CD8-positive, alpha-beta T cell (primary cell): ENCODE measurements at regions of chr2 and their contacts with region 1.

Region 1: DNA sequence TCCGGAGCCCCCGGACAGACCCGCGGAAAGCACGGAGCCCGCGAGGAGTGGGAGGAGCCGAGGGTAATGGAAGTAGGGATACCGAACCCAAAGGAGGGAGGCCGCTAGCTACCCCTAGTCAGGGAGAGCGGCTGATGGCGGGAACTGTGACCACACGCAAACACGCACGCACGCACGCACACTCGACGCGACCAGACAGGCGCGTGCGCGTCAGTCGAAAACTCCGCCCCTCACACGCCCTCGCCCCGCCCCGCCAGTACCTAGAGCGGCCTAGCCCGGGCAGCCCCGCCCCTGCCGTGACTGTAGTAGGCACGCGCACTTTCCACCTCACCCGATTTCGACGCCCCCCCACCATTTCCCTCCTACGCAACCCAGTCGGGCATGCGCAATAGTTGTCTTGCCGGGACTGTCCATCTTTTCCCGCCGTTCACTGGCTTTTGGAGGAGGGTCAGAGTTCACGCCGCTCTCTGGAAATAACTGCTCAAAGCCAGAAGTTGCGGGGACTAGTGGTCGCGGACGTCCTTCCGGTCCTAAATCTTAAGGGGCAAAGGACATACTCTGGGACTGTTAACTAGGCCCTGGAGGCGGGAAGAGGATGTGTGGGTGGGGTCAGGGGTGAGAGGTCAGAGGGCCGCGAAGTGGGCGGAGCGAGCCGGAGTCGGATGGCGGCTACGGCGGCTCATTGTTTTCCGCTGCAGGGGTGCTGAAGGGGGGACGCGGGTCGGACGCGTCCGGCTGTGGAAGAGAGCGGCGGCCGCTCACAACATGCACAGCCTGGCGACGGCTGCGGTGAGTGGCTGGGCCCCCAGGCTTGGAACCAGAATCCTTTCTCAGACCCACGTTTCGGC is at the starts of genes CNOT9 and USP37:
- DNase-seq: peak; percentile 99 to 100 (median 100)
- ATAC-seq: peak; percentile 90
- H3K4me3 ChIP-seq: peak within 1 kb of the TSS; percentile 84 to 92
- H3K4me3 Mint-ChIP-seq: peak within 1 kb of the TSS; percentile 96
- H3K27ac ChIP-seq: peak within 1 kb of the TSS; percentile 91 to 99
- H3K27ac Mint-ChIP-seq: peak within 1 kb of the TSS; percentile 98
- H3K4me1 ChIP-seq: peaks cover 45% of the 10 kb centered on the region
- H3K4me1 Mint-ChIP-seq: peaks cover 63% of the 10 kb centered on the region
- H3K27me3 ChIP-seq: no peaks in the 10 kb centered on the region
- H3K27me3 Mint-ChIP-seq: no peaks in the 10 kb centered on the region
- CTCF ChIP-seq: no peak
- total RNA-seq, gene CNOT9: 73.9 to 79.3 TPM
- total RNA-seq, gene USP37: 22.8 to 23.2 TPM

Region 2: GRCh38 chr2:218286570-218287459 is 281.6 kb before region 1 on chr2:
- CTCF ChIA-PET with region 1: no interaction called
- POLR2A ChIA-PET with region 1: no interaction called
- intact Hi-C with region 1: loop called (anchors 2 to 5 kb)
- DNase-seq: peak; percentile 56 to 97 (median 80)
- ATAC-seq: peak; percentile 62
- H3K4me3 ChIP-seq: peak overlapping the region; percentile 51 to 60
- H3K4me3 Mint-ChIP-seq: peak overlapping the region; percentile 90
- H3K27ac ChIP-seq: peak overlapping the region; percentile 87 to 99
- H3K27ac Mint-ChIP-seq: peak overlapping the region; percentile 100
- H3K4me1 ChIP-seq: peaks cover 93% of the 10 kb centered on the region
- H3K4me1 Mint-ChIP-seq: peaks cover 78% of the 10 kb centered on the region
- H3K27me3 ChIP-seq: no peaks in the 10 kb centered on the region
- H3K27me3 Mint-ChIP-seq: no peaks in the 10 kb centered on the region
- CTCF ChIP-seq: no peak

Region 3: DNA sequence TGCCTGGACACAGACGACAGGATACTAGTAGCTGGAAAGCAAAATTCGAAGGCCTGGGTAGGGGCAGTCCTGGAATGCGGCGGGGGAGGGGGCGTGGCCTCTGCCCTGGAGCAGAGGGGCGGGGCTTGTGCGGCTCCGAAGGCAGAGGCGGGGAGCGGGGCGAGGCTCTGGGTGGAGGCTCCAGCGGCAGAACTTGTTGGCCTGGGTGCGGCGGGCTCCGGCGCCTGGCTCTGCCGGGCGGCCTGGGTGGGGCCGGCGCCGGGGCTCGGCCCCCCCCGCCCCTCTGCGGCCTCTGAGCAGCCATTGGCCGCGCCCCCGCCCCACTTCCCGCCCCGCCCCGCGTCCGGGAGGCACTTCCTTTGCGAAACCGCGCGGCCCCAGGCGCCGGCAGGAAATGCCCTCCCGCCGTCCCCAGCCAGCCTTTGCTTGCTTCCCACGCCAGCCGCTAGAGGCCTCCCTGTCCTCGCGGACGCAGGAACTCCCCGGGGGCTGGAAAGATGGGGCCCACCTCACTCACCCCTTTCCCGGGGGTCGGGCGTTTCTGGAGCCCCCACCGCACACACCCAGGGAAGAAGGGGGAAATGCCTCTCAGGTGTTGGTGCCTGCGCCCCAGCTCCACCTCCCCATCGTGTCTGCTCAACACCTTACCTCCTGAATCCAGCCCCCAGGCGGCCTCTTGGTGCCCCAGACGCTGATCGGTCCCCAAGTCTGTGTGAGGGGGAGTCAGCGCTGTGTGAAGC is 162.0 kb before region 1 on chr2:
- CTCF ChIA-PET with region 1: no interaction called
- POLR2A ChIA-PET with region 1: no interaction called
- intact Hi-C with region 1: loop called in 1 of 2 experiments (anchors 1 kb)
- DNase-seq: peak; percentile 79 to 98 (median 95)
- ATAC-seq: peak; percentile 68
- H3K4me3 ChIP-seq: peak overlapping the region; percentile 52 to 63
- H3K4me3 Mint-ChIP-seq: peak overlapping the region; percentile 82
- H3K27ac ChIP-seq: peak overlapping the region; percentile 56 to 73
- H3K27ac Mint-ChIP-seq: peak overlapping the region; percentile 94
- H3K4me1 ChIP-seq: peaks cover 49% of the 10 kb centered on the region
- H3K4me1 Mint-ChIP-seq: peaks cover 56% of the 10 kb centered on the region
- H3K27me3 ChIP-seq: no peaks in the 10 kb centered on the region
- H3K27me3 Mint-ChIP-seq: peaks cover 2% of the 10 kb centered on the region
- CTCF ChIP-seq: peak; percentile 59

Region 4: DNA sequence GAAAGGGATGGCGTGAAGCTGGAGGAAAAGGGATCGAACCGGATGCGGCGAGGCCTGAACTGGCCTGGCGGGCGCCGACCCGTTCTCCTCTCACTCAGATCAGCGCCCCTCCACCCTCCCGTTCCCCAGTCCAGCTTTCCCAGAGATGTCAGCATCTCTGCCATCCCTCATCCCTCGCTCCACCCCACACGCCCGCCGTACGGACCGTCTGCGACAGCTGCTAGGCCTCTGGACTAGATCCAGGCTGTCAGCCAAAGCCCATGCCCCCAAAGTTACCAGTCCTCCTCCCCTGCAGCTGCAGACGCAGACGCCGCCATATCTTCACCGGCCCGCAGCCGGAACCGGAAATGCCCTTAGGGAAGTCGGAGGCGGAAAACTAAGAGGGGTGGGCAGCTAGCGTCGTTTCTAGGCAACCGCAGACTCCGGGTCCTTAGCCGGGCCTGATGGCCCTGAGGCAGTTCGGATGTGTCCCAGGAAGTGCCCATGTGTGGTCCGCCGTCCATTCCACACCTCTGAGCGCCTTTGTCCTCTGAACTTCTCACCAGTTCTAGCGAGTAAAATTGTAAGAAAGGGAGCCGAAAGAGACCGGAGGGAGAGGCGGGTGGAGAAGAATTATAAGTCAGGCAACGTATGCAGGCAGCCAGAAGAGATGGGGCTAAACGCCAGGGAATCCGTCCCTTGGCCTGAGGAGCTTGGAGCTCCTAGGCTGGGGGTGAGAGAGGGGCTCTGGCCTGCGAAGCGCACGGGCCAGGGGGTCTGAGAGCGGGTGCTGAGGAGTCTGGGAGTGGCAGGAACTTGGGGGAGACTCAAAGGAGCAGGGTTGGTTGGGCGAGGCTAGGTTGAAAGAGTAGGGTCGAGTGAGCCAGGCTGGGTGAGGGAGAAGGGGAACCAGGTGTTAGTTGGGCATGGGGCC is 103.5 kb after region 1 on chr2 and contains the starts of genes RNF25 and STK36:
- CTCF ChIA-PET with region 1: no interaction called
- POLR2A ChIA-PET with region 1: no interaction called
- intact Hi-C with region 1: loop called (anchors 2 to 5 kb)
- DNase-seq: peak; percentile 56 to 90 (median 82)
- ATAC-seq: peak; percentile 92
- H3K4me3 ChIP-seq: peak within 1 kb of the TSS; percentile 80 to 86
- H3K4me3 Mint-ChIP-seq: peak within 1 kb of the TSS; percentile 97
- H3K27ac ChIP-seq: peak within 1 kb of the TSS; percentile 74 to 83
- H3K27ac Mint-ChIP-seq: peak within 1 kb of the TSS; percentile 96
- H3K4me1 ChIP-seq: peaks cover 16% of the 10 kb centered on the region
- H3K4me1 Mint-ChIP-seq: peaks cover 25% of the 10 kb centered on the region
- H3K27me3 ChIP-seq: no peaks in the 10 kb centered on the region
- H3K27me3 Mint-ChIP-seq: no peaks in the 10 kb centered on the region
- CTCF ChIP-seq: no peak
- total RNA-seq, gene RNF25: 26.0 to 29.3 TPM
- total RNA-seq, gene STK36: 7.5 to 8.1 TPM

Region 5: GRCh38 chr2:219498280-219499057 is 930.1 kb after region 1 on chr2 and contains the start of gene GMPPA:
- CTCF ChIA-PET with region 1: no interaction called
- POLR2A ChIA-PET with region 1: no interaction called
- intact Hi-C with region 1: loop called in 1 of 2 experiments (anchors 5 kb)
- DNase-seq: peak; percentile 82 to 95 (median 89)
- ATAC-seq: peak; percentile 90
- H3K4me3 ChIP-seq: peak within 1 kb of the TSS; percentile 75 to 83
- H3K4me3 Mint-ChIP-seq: peak within 1 kb of the TSS; percentile 89
- H3K27ac ChIP-seq: peak within 1 kb of the TSS; percentile 52 to 59
- H3K27ac Mint-ChIP-seq: peak within 1 kb of the TSS; percentile 84
- H3K4me1 ChIP-seq: peaks cover 39% of the 10 kb centered on the region
- H3K4me1 Mint-ChIP-seq: peaks cover 35% of the 10 kb centered on the region
- H3K27me3 ChIP-seq: peaks cover 25 to 34% of the 10 kb centered on the region in 2 experiments
- H3K27me3 Mint-ChIP-seq: peaks cover 33% of the 10 kb centered on the region
- CTCF ChIP-seq: no peak
- total RNA-seq, gene GMPPA: 9.4 to 15.0 TPM